Activated CD4-positive, alpha-beta T cell treated with anti-CD3 and anti-CD28 coated beads for 36 hours (primary cell): ENCODE measurements at regions of chr1 and their contacts with region 1.

Region 1: GRCh38 chr1:44354840-44355581 is at the start of gene ERI3:
- DNase-seq: peak; percentile 98
- ATAC-seq: peak; percentile 100
- H3K4me3 Mint-ChIP-seq: peak within 1 kb of the TSS; percentile 90
- H3K27ac Mint-ChIP-seq: peak within 1 kb of the TSS; percentile 82
- H3K4me1 Mint-ChIP-seq: peaks cover 34% of the 10 kb centered on the region
- H3K27me3 Mint-ChIP-seq: no peaks in the 10 kb centered on the region
- total RNA-seq, gene ERI3: 36.7 to 41.3 TPM

Region 2: DNA sequence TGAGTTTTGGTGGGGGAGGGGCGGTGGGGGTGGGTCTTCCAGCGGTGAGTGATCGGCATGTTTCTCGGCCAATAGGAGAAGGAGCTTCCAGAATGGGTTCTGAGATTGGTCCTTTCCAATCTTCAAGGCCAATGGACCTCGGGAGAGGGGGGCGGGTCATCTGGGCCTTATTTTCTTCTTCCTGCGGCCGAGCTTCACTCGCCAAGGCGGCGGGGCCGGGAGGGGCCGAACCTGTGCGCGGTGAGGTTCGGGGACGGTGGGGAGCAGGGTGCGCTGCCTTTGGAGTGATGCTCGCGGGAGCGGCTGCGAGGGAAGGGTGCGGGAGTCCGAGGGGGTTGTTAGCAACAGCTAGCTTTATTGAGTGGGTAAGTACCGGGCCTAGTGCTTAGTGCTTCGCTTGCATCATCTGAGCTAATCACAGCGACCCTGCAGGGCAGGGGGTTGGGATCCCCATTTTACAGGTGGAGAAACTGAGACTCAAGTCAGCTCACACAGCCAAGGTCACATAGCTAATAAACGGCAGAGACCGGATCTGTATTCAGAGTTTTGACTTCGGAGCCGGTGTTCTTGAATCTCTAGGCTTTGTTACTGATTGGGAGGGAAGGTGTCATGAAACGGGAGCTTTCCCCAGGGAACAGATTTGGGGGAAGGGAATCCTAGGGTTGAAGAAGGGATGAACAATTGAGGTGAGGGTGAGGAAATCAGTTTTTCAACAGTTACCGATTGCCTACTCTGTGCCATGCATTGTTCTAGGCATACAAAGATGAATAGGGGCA is 704.5 kb before region 1 on chr1:
- CTCF ChIA-PET with region 1: no interaction called
- POLR2A ChIA-PET with region 1: no interaction called
- intact Hi-C with region 1: loop called in 1 of 2 experiments (anchors 5 kb)
- DNase-seq: peak; percentile 95
- ATAC-seq: peak; percentile 81
- H3K4me3 Mint-ChIP-seq: peak overlapping the region; percentile 89
- H3K27ac Mint-ChIP-seq: peak overlapping the region; percentile 97
- H3K4me1 Mint-ChIP-seq: peaks cover 31% of the 10 kb centered on the region
- H3K27me3 Mint-ChIP-seq: no peaks in the 10 kb centered on the region

Region 3: GRCh38 chr1:43991476-43992231 is 363.4 kb before region 1 on chr1 and contains the start of gene CCDC24:
- CTCF ChIA-PET with region 1: no interaction called
- POLR2A ChIA-PET with region 1: no interaction called
- intact Hi-C with region 1: loop called in 1 of 2 experiments (anchors 1 kb)
- DNase-seq: peak; percentile 82
- ATAC-seq: peak; percentile 82
- H3K4me3 Mint-ChIP-seq: peak within 1 kb of the TSS; percentile 79
- H3K27ac Mint-ChIP-seq: peak within 1 kb of the TSS; percentile 65
- H3K4me1 Mint-ChIP-seq: peaks cover 8% of the 10 kb centered on the region
- H3K27me3 Mint-ChIP-seq: no peaks in the 10 kb centered on the region
- total RNA-seq, gene CCDC24: 1.2 to 2.0 TPM

Region 4: GRCh38 chr1:44390277-44390676 is 35.3 kb after region 1 on chr1:
- CTCF ChIA-PET with region 1: no interaction called
- POLR2A ChIA-PET with region 1: no interaction called
- intact Hi-C with region 1: no loop called
- DNase-seq: no peak
- ATAC-seq: no peak
- H3K4me3 Mint-ChIP-seq: no peak overlapping the region
- H3K27ac Mint-ChIP-seq: no peak overlapping the region
- H3K4me1 Mint-ChIP-seq: no peaks in the 10 kb centered on the region
- H3K27me3 Mint-ChIP-seq: peaks cover 15% of the 10 kb centered on the region

Region 5: DNA sequence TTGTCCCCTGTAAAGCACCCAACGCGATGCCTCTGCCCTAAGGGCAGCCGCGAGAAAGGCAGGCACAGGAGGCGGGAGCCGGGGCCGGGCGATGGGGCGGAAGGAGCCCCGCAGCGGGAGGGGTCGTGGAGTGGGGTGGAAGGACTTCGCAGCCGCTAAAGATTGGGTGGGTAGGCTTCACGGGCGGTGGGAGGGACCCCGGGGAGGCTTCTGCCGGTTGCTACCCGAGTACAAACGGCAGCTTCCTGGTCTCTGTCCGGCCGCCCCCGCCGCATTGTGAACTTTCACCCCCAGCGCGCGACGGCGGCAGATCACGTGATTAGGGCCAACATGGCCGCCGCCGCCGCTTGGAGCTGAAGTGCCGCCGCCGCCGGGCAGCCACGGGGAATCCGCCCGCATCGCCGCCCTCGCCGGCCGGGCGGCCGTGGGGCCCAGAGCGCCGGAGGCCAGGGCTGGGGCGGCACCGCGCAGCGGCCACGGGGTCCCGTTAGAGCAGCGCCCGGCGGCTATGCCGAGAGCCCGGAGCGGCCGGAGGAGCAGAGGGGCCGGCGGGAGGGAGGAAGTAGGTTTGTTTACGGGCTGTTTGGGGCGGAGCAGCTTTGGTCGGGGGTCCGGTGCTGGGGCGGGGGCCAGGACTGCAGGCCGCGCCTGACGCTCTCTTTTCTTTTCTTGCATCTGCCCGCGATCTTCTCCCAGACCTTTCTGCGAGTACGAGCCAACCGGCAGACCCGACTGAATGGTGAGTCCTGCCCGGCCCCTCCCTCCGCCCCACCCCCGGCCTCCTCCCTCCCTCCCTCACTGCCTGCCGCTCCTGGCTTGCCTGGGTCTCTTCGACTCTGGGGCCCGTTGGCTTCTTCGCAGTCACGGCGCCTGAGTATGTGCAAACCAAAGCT is 276.9 kb after region 1 on chr1:
- CTCF ChIA-PET with region 1: no interaction called
- POLR2A ChIA-PET with region 1: no interaction called
- intact Hi-C with region 1: loop called in 1 of 2 experiments (anchors 1 kb)
- DNase-seq: peak; percentile 95
- ATAC-seq: peak; percentile 81
- H3K4me3 Mint-ChIP-seq: peak overlapping the region; percentile 86
- H3K27ac Mint-ChIP-seq: peak overlapping the region; percentile 97
- H3K4me1 Mint-ChIP-seq: peaks cover 40% of the 10 kb centered on the region
- H3K27me3 Mint-ChIP-seq: no peaks in the 10 kb centered on the region

Region 6: GRCh38 chr1:44674113-44675000 is 319.3 kb after region 1 on chr1 and contains the starts of genes ARMH1 and TMEM53:
- CTCF ChIA-PET with region 1: interaction called, 3 read pairs
- POLR2A ChIA-PET with region 1: no interaction called
- intact Hi-C with region 1: loop called in 1 of 2 experiments (anchors 1 kb)
- DNase-seq: peak; percentile 99
- ATAC-seq: peak; percentile 97
- H3K4me3 Mint-ChIP-seq: peak within 1 kb of the TSS; percentile 78
- H3K27ac Mint-ChIP-seq: peak within 1 kb of the TSS; percentile 84
- H3K4me1 Mint-ChIP-seq: peaks cover 24% of the 10 kb centered on the region
- H3K27me3 Mint-ChIP-seq: no peaks in the 10 kb centered on the region
- total RNA-seq, gene ARMH1: 67.3 to 75.1 TPM
- total RNA-seq, gene TMEM53: 4.3 to 5.5 TPM